SK-N-SH (cell line): ENCODE measurements at regions of chr11 and their contacts with region 1.

Region 1: GRCh38 chr11:73661035-73661628 is 14.8 kb downstream of the PLEKHB1 start:
- DNase-seq: peak; percentile 97
- H3K4me3 ChIP-seq: peak overlapping the region; percentile 35 to 51; a peak in 3 of 4 replicates
- H3K27ac ChIP-seq: no peak overlapping the region
- H3K4me1 ChIP-seq: peaks cover 0 to 6% of the 10 kb centered on the region in 2 experiments; a peak in 1 of 4 replicates
- H3K27me3 ChIP-seq: no peaks in the 10 kb centered on the region
- CTCF ChIP-seq: peak; percentile 94
- EP300 ChIP-seq: no peak
- RAD21 ChIP-seq: peak; percentile 99

Region 2: GRCh38 chr11:73335204-73335923 is 325.8 kb before region 1 on chr11:
- CTCF ChIA-PET with region 1: interaction called, 17 read pairs
- POLR2A ChIA-PET with region 1: interaction called, 3 read pairs
- DNase-seq: peak; percentile 83
- H3K4me3 ChIP-seq: peak overlapping the region; percentile 1 to 7; a peak in 2 of 4 replicates
- H3K27ac ChIP-seq: peak overlapping the region; percentile 97 to 98
- H3K4me1 ChIP-seq: peaks cover 48 to 58% of the 10 kb centered on the region in 2 experiments
- H3K27me3 ChIP-seq: no peaks in the 10 kb centered on the region
- CTCF ChIP-seq: peak; percentile 99
- EP300 ChIP-seq: no peak; a peak in 1 of 4 replicates
- RAD21 ChIP-seq: peak; percentile 98

Region 3: DNA sequence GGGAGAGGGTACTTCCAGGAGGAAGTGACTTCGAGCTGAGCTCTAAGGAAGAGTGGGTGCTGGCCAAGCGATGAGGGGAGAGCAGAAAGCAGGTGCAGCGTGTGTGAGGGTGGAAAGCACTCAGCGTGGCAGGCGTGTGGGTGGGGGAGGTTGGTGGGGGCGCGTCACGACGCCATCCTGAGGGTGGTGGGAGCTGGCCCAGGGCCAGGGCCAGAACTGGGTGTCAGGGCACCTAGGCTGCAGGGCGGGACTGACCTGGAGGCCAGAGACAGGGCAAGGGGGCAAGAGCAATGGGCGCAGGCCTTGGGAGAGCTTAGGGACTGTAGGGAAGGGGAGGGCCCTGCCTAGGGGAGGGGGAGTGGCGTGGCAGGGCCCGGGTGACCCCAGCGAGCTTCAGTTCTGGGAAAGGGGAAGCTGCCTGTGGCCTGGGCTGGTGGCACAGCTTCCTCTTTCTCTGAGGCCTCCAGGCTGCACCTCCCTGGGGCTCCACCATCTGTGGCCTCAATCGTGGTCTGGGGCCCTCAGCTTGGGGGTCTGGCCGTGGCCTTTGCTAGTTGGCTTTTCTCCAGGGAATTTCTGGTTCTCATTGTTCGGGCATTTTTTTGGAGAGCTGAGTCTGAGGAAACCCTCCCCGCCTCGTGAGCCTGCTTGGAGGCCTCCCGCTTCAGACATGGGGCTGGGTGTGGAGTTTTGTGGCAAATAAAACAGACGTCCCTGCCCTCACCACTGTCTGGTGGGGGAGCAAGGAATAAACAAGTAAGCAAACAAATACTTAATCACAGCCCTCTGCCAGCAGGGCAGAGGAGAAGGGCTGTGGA is 276.1 kb before region 1 on chr11:
- CTCF ChIA-PET with region 1: interaction called, 71 read pairs
- POLR2A ChIA-PET with region 1: no interaction called
- DNase-seq: no peak
- H3K4me3 ChIP-seq: no peak overlapping the region
- H3K27ac ChIP-seq: no peak overlapping the region
- H3K4me1 ChIP-seq: peaks cover 15 to 24% of the 10 kb centered on the region in 2 experiments; a peak in 2 of 4 replicates
- H3K27me3 ChIP-seq: no peaks in the 10 kb centered on the region
- CTCF ChIP-seq: no peak
- EP300 ChIP-seq: no peak
- RAD21 ChIP-seq: no peak

Region 4: GRCh38 chr11:73425108-73425507 is 236.0 kb before region 1 on chr11:
- CTCF ChIA-PET with region 1: interaction called, 11 read pairs
- POLR2A ChIA-PET with region 1: no interaction called
- DNase-seq: no peak
- H3K4me3 ChIP-seq: no peak overlapping the region
- H3K27ac ChIP-seq: no peak overlapping the region; a peak in 1 of 4 replicates
- H3K4me1 ChIP-seq: peaks cover 20% of the 10 kb centered on the region in 2 experiments
- H3K27me3 ChIP-seq: no peaks in the 10 kb centered on the region
- CTCF ChIP-seq: no peak
- EP300 ChIP-seq: no peak
- RAD21 ChIP-seq: no peak

Region 5: GRCh38 chr11:73597956-73598718 is 63.0 kb before region 1 on chr11 and contains the start of gene FAM168A:
- CTCF ChIA-PET with region 1: interaction called, 11 read pairs
- POLR2A ChIA-PET with region 1: interaction called, 3 read pairs
- DNase-seq: peak; percentile 96
- H3K4me3 ChIP-seq: peak within 1 kb of the TSS; percentile 71 to 76
- H3K27ac ChIP-seq: peak within 1 kb of the TSS; percentile 70 to 92
- H3K4me1 ChIP-seq: peaks cover 9 to 12% of the 10 kb centered on the region in 2 experiments; a peak in 3 of 4 replicates
- H3K27me3 ChIP-seq: no peaks in the 10 kb centered on the region
- CTCF ChIP-seq: 0 out of 2 replicates have a peak, but pooled peaks have one; percentile 27
- EP300 ChIP-seq: no peak
- RAD21 ChIP-seq: no peak; the same call in 1 of the 2 replicates
- polyA plus RNA-seq, gene FAM168A: 17.8 and 18.2 TPM in 2 replicates

Region 6: DNA sequence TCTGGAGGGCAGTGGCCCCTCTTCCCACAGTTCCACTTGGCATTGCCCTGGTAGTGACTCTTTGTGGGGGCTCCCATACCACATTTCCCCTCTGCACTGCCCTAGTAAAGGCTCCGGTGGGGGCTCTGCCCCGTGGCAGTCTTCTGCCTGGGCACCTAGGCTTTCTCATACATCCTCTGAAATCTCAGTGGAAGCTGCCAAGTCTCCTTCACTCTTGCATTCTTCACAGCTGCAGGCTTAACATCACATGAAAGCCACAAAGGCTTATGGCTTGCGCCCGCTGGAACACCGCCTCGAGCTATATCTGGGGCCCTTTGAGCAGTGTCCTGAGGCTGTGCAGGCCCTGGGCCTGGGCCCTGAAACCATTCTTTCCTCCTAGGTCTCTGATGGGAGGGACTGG is 10.6 kb after region 1 on chr11:
- CTCF ChIA-PET with region 1: interaction called, 21 read pairs
- POLR2A ChIA-PET with region 1: no interaction called
- DNase-seq: no peak
- H3K4me3 ChIP-seq: no peak overlapping the region
- H3K27ac ChIP-seq: no peak overlapping the region
- H3K4me1 ChIP-seq: no peaks in the 10 kb centered on the region
- H3K27me3 ChIP-seq: no peaks in the 10 kb centered on the region
- CTCF ChIP-seq: no peak
- EP300 ChIP-seq: no peak
- RAD21 ChIP-seq: no peak